Activated B cell treated with CpG ODN at 0.5 μM for 24 hours (primary cell): ENCODE measurements at regions of chr15 and their contacts with region 1.

Region 1: DNA sequence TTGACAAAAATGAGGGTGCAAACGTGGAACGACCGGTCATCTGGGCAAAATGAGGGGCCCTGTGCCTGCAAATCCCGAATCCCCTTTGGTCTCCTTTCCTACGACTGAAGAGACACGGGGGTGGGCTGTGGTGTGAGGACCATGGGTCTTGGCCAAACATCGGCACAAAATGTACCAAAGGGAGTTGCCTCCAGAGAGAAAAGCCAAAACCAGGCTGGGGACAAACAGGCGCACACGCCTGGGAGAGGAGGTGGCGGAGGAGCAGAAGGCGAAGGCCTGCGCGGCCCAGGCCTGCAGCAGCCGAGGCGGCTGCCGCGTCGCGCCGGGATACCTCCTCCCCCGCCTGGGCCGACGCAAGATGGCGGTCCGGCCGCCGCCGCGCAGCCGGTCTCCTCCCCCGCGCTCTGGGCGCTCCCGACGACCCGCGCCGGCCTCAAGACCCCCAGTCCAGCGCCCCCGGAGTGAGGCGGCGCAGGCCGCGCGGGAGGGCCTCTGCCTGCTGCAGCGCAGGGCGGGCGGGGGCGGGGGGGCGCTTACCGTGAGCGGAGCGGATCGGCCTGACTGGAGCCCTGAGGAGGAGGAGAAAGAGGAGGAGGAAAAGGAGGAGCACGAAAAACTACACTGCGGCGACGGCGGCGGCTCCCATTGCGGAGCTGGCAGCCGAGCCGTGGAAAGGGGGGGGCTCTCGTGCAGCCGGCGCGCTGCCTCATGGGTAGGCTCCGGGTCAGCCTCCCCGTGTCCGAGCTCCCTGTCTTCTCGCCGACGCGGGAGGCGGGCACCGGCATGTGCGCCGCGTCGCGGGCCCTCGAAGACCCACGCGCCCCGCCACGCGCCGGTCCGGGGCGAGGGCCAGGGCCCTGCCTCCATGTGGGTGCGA is at the start of gene ZNF280D:
- DNase-seq: peak; percentile 70
- ATAC-seq: peak; percentile 87
- H3K4me3 Mint-ChIP-seq: peak within 1 kb of the TSS; percentile 96
- H3K27ac Mint-ChIP-seq: peak within 1 kb of the TSS; percentile 93
- H3K4me1 Mint-ChIP-seq: peaks cover 31% of the 10 kb centered on the region
- H3K27me3 Mint-ChIP-seq: no peaks in the 10 kb centered on the region
- CTCF ChIP-seq: no peak
- total RNA-seq, gene ZNF280D: 37.9 and 40.0 TPM in 2 replicates

Region 2: DNA sequence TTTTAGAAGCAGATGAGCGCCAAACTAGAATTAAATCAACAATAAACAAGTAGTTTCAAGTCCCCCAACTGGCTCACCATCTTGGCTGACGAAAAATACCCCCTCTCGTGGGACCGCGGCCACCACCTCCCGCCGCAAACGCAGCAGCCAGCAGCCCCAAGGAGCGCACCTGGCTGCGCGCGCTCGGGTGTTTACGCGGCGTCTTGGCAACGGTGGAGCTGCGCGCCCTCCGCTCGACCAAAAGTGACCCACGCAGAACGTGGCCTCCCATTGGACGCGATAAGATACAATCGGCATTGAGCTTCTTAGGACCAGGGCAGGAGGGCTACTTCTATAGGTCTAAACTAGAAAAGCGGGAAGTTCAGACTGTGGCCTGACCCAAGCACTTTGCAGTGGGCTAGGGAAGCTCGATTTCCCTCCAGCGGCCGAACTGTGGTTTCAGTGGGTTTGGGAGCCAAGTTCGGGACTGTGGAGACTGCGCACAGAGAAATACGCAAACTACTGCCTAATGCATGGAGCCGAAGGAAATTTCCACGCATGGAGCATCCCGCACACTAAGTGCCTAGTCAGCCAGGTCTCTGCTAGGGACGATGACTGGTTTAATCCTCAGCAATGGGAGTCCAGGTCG is 268.2 kb before region 1 on chr15 and contains the start of gene MNS1:
- CTCF ChIA-PET with region 1: no interaction called
- POLR2A ChIA-PET with region 1: no interaction called
- intact Hi-C with region 1: loop called (anchors 5 kb)
- DNase-seq: peak; percentile 84
- ATAC-seq: peak; percentile 95
- H3K4me3 Mint-ChIP-seq: peak within 1 kb of the TSS; percentile 92
- H3K27ac Mint-ChIP-seq: peak within 1 kb of the TSS; percentile 97
- H3K4me1 Mint-ChIP-seq: peaks cover 21% of the 10 kb centered on the region
- H3K27me3 Mint-ChIP-seq: no peaks in the 10 kb centered on the region
- CTCF ChIP-seq: no peak
- total RNA-seq, gene MNS1: 0.62 and 0.66 TPM in 2 replicates

Region 3: GRCh38 chr15:56699743-56700142 is 33.4 kb before region 1 on chr15:
- CTCF ChIA-PET with region 1: no interaction called
- POLR2A ChIA-PET with region 1: no interaction called
- intact Hi-C with region 1: loop called (anchors 1 kb)
- DNase-seq: no peak
- ATAC-seq: no peak
- H3K4me3 Mint-ChIP-seq: no peak overlapping the region
- H3K27ac Mint-ChIP-seq: no peak overlapping the region
- H3K4me1 Mint-ChIP-seq: no peaks in the 10 kb centered on the region
- H3K27me3 Mint-ChIP-seq: no peaks in the 10 kb centered on the region
- CTCF ChIP-seq: no peak

Region 4: GRCh38 chr15:56719774-56720555 is 13.2 kb before region 1 on chr15:
- CTCF ChIA-PET with region 1: no interaction called
- POLR2A ChIA-PET with region 1: interaction called, 5 read pairs
- intact Hi-C with region 1: loop called (anchors 2 kb)
- DNase-seq: no peak
- ATAC-seq: no peak
- H3K4me3 Mint-ChIP-seq: no peak overlapping the region
- H3K27ac Mint-ChIP-seq: peak overlapping the region; percentile 86
- H3K4me1 Mint-ChIP-seq: peaks cover 68% of the 10 kb centered on the region
- H3K27me3 Mint-ChIP-seq: no peaks in the 10 kb centered on the region
- CTCF ChIP-seq: no peak

Region 5: GRCh38 chr15:56786966-56787365 is 53.8 kb after region 1 on chr15:
- CTCF ChIA-PET with region 1: no interaction called
- POLR2A ChIA-PET with region 1: no interaction called
- intact Hi-C with region 1: loop called (anchors 2 kb)
- DNase-seq: no peak
- ATAC-seq: peak; percentile 31
- H3K4me3 Mint-ChIP-seq: no peak overlapping the region
- H3K27ac Mint-ChIP-seq: no peak overlapping the region
- H3K4me1 Mint-ChIP-seq: peaks cover 6% of the 10 kb centered on the region
- H3K27me3 Mint-ChIP-seq: no peaks in the 10 kb centered on the region
- CTCF ChIP-seq: no peak

Region 6: GRCh38 chr15:56835718-56836171 is 102.6 kb after region 1 on chr15:
- CTCF ChIA-PET with region 1: no interaction called
- POLR2A ChIA-PET with region 1: interaction called, 3 read pairs
- intact Hi-C with region 1: loop called (anchors 5 kb)
- DNase-seq: no peak
- ATAC-seq: no peak
- H3K4me3 Mint-ChIP-seq: no peak overlapping the region
- H3K27ac Mint-ChIP-seq: no peak overlapping the region
- H3K4me1 Mint-ChIP-seq: peaks cover 38% of the 10 kb centered on the region
- H3K27me3 Mint-ChIP-seq: no peaks in the 10 kb centered on the region
- CTCF ChIP-seq: no peak

Region 7: GRCh38 chr15:56886932-56887781 is 154.0 kb after region 1 on chr15:
- CTCF ChIA-PET with region 1: interaction called, 3 read pairs
- POLR2A ChIA-PET with region 1: interaction called, 4 read pairs
- intact Hi-C with region 1: loop called (anchors 10 kb)
- DNase-seq: peak; percentile 81
- ATAC-seq: peak; percentile 85
- H3K4me3 Mint-ChIP-seq: peak overlapping the region; percentile 87
- H3K27ac Mint-ChIP-seq: peak overlapping the region; percentile 91
- H3K4me1 Mint-ChIP-seq: peaks cover 28% of the 10 kb centered on the region
- H3K27me3 Mint-ChIP-seq: no peaks in the 10 kb centered on the region
- CTCF ChIP-seq: no peak